ENCODE measurements at regions of chr1 and their contacts with region 1.

Region 1: DNA sequence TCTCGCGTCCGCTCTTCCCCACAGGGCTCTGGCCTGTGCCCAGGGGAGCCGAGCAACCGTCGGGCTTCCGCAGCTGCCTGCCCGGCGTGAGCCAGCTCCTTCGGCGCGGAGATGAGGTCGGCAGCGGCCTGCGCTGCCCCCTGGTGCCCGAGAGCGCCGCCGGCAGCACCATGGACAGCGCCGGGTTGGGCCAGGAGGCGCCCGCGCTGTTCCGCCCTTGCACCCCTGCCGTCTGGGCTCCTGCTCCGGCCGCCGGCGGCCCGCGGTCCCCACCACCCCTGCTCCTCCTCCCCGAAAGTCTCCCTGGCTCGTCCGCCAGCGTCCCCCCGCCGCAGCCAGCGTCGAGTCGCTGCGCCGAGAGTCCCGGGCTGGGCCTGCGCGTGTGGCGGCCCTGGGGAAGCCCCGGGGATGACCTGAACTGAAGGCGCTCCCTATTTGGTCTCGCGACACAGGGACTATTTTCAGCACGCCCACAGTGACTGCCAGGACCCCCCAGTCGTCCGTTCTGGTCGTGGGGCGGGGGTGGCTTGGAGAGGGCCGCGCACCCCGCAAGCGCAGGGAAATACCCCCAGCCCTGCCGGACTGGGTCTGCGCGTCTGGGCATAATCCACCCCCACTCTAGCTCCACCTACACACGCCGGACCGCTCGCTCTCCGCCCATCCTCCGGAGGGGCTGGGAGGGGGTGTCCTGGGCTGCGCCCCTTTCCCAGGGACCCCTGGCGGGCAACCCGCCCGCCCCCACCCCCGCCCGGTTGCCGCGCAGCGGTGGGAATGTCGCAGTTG is 1.3 kb downstream of the HES3 start:
- DNase-seq: peak; percentile 78
- ATAC-seq: peak; percentile 84
- H3K4me3 Mint-ChIP-seq: no peak overlapping the region
- H3K27ac Mint-ChIP-seq: no peak overlapping the region
- H3K4me1 Mint-ChIP-seq: peaks cover 15% of the 10 kb centered on the region
- H3K27me3 Mint-ChIP-seq: peaks cover 40% of the 10 kb centered on the region
- CTCF ChIP-seq: no peak

Region 2: DNA sequence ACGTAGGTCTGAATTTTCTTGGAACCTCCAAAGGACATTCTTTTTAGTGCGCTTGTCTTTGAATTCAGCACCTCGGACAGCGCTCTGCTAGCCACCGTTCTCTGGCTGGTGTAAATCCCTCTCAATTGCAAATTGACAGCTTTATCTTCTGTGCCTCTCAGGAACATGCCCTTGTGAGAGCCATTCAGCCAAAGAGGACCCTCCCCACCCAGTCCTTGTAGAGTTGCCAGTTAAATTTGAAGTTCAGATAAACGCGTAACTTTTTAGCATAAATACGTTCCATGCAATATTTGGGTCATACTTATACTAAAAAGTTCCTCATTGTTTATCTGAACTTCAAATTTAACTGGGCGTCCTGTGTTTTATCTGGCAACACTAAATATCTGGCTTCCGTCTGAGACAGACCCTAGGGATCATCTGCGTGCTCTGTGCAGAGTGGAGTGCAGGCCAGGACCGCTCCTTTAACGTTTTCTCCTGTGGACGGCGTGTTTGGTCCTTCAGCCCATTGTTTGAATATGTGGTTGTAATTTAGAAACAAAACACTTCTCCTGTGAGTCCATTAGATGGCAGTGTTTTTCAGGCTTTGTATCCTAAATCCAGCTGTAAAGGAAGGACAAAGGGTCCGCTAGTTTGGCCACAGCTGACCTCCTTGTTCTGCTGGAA is 192.6 kb before region 1 on chr1:
- CTCF ChIA-PET with region 1: no interaction called
- POLR2A ChIA-PET with region 1: no interaction called
- intact Hi-C with region 1: loop called (anchors 10 kb)
- DNase-seq: no peak
- ATAC-seq: no peak
- H3K4me3 Mint-ChIP-seq: no peak overlapping the region
- H3K27ac Mint-ChIP-seq: no peak overlapping the region
- H3K4me1 Mint-ChIP-seq: peaks cover 5% of the 10 kb centered on the region
- H3K27me3 Mint-ChIP-seq: no peaks in the 10 kb centered on the region
- CTCF ChIP-seq: no peak

Region 3: DNA sequence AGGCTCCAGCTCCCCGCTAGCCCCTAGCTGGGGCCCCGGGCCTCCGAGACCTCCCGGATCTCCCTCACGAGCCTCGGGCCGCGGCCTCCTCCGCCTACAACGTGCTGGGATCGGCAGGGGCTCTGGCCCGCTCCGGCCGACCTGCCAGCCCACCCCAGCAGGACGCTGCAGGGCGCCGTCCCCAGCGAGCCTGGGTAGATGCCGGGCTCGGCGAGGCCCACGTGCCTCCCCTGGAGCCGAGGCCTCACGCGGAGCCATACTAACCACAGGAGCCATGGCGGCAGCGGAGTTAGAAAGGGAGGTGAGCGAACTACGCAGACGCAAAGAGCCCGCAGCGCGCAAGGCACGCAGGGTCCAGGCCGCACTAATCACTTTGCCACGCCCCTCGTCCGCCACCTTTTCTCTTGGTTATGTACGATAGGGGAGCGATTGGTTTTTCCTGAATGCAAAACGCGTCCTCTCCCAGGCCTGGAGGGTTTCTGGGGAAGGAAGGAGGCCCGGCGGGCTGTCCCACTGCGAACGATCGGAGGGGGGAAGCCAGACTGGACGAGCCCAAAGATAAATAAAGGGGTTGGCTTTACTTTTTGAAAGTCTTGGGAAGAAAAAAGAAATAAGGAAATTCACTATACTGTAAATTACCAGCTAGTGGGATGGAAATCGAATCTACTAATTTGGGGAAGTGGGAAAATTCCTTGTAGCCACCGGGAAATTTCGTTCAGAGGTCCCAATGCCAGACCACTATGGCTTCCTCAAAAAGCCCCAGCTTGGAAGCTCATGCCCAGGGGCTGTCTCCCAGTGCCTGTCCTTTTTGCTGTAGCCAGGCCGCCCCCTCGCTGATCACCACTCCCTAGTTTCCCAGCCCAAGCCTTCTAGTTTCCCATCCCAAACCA is 45.7 kb before region 1 on chr1 and contains the start of gene RPL22:
- CTCF ChIA-PET with region 1: no interaction called
- POLR2A ChIA-PET with region 1: no interaction called
- intact Hi-C with region 1: loop called (anchors 2 kb)
- DNase-seq: peak; percentile 89
- ATAC-seq: peak; percentile 97
- H3K4me3 Mint-ChIP-seq: peak within 1 kb of the TSS; percentile 88
- H3K27ac Mint-ChIP-seq: peak within 1 kb of the TSS; percentile 94
- H3K4me1 Mint-ChIP-seq: peaks cover 44% of the 10 kb centered on the region
- H3K27me3 Mint-ChIP-seq: peaks cover 3% of the 10 kb centered on the region
- CTCF ChIP-seq: no peak
- total RNA-seq, gene RPL22: 614 and 621 TPM in 2 replicates

Region 4: GRCh38 chr1:6401673-6402072 is 156.4 kb after region 1 on chr1:
- CTCF ChIA-PET with region 1: interaction called, 32 read pairs
- POLR2A ChIA-PET with region 1: no interaction called
- intact Hi-C with region 1: loop called (anchors 1 kb)
- DNase-seq: no peak
- ATAC-seq: no peak
- H3K4me3 Mint-ChIP-seq: no peak overlapping the region
- H3K27ac Mint-ChIP-seq: no peak overlapping the region
- H3K4me1 Mint-ChIP-seq: no peaks in the 10 kb centered on the region
- H3K27me3 Mint-ChIP-seq: peaks cover 11% of the 10 kb centered on the region
- CTCF ChIP-seq: no peak

Region 5: DNA sequence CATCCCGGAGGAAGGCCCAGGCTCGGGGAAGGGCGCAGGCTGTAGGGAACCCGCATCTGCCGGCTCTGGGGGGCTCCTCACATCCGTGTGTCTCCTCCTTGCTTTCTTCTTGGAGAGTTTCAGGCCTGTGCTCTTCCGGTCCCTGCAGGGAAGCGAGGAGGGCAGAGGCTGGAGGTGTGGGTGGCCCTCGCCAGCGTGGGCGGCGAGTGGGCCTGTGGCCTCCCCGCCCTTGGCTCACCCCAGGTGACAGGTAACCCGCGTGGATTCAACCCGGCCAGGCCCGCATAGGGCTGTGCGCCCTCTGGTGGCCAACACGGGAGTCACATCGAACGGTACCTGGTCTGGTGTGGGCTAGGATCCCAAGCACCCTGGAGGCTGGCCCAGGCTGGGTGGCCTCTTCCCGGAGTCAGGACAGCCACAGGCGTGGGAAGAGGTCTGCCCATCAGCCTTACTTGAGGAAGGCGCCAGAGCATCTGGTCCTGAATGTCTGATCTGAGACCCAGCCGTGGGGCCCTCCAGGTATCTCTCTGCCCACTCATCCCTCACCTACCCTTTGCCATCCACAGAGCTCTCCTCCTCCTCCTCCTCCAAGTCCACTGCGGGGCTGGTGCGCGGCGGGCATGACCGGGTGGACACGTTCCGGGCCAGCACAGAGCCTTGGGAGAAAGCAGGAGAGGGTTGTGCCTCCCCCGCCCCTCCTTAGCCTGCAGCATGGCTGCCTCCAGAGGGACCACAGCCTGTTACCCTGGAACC is 230.3 kb after region 1 on chr1:
- CTCF ChIA-PET with region 1: interaction called, 4 read pairs
- POLR2A ChIA-PET with region 1: no interaction called
- intact Hi-C with region 1: loop called (anchors 1 kb)
- DNase-seq: peak; percentile 70
- ATAC-seq: peak; percentile 94
- H3K4me3 Mint-ChIP-seq: no peak overlapping the region
- H3K27ac Mint-ChIP-seq: no peak overlapping the region
- H3K4me1 Mint-ChIP-seq: no peaks in the 10 kb centered on the region
- H3K27me3 Mint-ChIP-seq: peaks cover 1% of the 10 kb centered on the region
- CTCF ChIP-seq: peak; percentile 63

Measured in activated B cell treated with CpG ODN at 0.5 μM for 24 hours (primary cell).